Panc1 (cell line): ENCODE measurements at regions of chr9 and their contacts with region 1.

Region 1: GRCh38 chr9:19320495-19320894 is 59.5 kb downstream of the RPS6 start:
- DNase-seq: no peak
- ATAC-seq: no peak
- H3K4me3 ChIP-seq: no peak overlapping the region
- H3K27ac ChIP-seq: no peak overlapping the region
- H3K4me1 ChIP-seq: no peaks in the 10 kb centered on the region
- H3K27me3 ChIP-seq: no peaks in the 10 kb centered on the region
- CTCF ChIP-seq: no peak

Region 2: DNA sequence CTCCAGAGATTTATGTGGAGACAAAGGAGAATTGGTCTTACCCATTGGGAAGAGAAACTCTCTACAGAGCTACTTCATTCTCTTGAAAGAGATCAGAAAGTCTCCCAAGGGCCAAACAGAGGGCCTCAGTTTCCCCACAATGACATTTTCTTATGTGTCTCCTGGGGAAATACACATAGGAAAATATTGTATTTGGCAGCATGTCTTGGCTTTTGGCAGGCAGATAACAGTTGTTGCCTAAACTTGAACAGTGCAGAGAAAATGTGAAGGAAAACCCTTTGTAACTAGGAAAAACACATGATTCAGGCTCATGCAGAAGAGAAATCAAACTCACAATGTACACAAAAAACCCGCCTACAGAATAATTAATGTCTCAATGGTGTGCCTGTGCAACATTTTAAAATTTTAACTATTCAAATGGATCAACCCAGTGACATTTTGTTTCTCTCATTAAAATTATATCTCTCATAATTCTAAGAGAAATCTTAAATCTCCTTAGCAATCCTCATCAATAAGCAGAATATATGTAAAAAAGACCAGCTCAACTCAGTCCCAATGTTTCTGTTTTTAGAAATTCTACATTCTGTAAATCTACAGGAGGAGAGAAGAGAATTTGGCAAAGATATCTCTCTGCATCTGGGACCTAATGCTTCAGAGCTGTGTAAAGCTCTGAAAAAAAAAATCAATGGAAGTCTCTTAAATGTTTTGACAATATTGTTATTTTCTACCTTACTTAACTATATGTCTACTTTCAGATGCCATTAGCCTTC is 641.5 kb before region 1 on chr9:
- CTCF ChIA-PET with region 1: no interaction called
- POLR2A ChIA-PET with region 1: interaction called, 10 read pairs
- in situ Hi-C with region 1: no loop called
- intact Hi-C with region 1: no loop called
- DNase-seq: no peak
- ATAC-seq: no peak
- H3K4me3 ChIP-seq: no peak overlapping the region
- H3K27ac ChIP-seq: no peak overlapping the region
- H3K4me1 ChIP-seq: no peaks in the 10 kb centered on the region
- H3K27me3 ChIP-seq: no peaks in the 10 kb centered on the region
- CTCF ChIP-seq: no peak

Region 3: GRCh38 chr9:19564396-19565061 is 244.0 kb after region 1 on chr9:
- CTCF ChIA-PET with region 1: no interaction called
- POLR2A ChIA-PET with region 1: no interaction called
- in situ Hi-C with region 1: no loop called
- intact Hi-C with region 1: no loop called
- DNase-seq: no peak
- ATAC-seq: no peak
- H3K4me3 ChIP-seq: no peak overlapping the region
- H3K27ac ChIP-seq: no peak overlapping the region
- H3K4me1 ChIP-seq: no peaks in the 10 kb centered on the region
- H3K27me3 ChIP-seq: no peaks in the 10 kb centered on the region
- CTCF ChIP-seq: no peak